ENCODE measurements at regions of chr20 and their contacts with region 1.

Region 1: DNA sequence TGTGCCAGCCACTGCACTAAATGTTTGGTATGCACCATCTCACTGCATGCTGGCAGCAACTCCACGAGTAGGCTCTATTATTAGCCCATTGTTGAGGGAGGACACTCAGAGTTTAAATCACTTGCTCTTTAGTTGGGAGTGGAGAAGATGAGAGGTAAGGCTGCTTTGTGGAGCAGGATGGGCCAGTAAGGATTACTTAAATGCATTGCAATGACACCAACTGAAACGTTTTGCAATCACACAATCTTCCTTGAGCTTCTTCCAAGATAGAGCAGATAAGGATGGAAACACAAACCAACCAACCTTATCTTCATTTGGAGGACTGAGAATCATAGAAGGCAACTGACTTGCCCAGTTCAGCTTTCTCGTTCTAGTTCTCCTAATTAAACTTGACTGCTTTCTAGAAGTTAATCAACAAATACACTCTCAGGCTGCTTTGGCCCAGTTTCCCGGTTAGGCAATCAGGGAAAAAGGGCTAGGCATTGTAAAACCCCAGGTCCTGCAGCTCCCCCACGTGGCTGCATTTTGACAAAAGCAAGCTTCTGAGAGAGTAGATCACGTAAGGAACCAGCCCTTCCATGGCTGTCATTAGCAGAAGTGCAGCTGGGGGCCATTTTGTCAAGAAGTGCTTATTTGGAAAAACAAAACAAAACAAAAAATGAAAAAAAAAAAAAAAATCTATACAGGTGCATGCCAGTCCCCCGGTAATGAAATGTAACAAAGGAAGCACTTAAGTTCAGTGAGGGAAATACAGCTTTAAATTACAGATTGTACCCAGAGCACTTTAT is 130.6 kb downstream of the BCAS1 start:
- DNase-seq: peak; percentile 95
- ATAC-seq: peak; percentile 91
- H3K4me3 ChIP-seq: no peak overlapping the region; a peak in 1 of 6 replicates
- H3K27ac ChIP-seq: no peak overlapping the region
- H3K4me1 ChIP-seq: peaks cover 83% of the 10 kb centered on the region
- H3K27me3 ChIP-seq: no peaks in the 10 kb centered on the region; a peak in 1 of 5 replicates
- CTCF ChIP-seq: peak; percentile 94
- EP300 ChIP-seq: no peak
- POLR2A ChIP-seq: no peak
- RAD21 ChIP-seq: peak; percentile 95

Region 2: GRCh38 chr20:53413186-53413631 is 526.6 kb before region 1 on chr20:
- CTCF ChIA-PET with region 1: no interaction called
- POLR2A ChIA-PET with region 1: no interaction called
- in situ Hi-C with region 1: loop called (anchors 5 kb)
- intact Hi-C with region 1: loop called (anchors 1 kb)
- DNase-seq: peak; percentile 83
- ATAC-seq: peak; percentile 96
- H3K4me3 ChIP-seq: peak overlapping the region in 1 of 3 experiments; percentile 20; a peak in 3 of 6 replicates
- H3K27ac ChIP-seq: no peak overlapping the region
- H3K4me1 ChIP-seq: no peaks in the 10 kb centered on the region
- H3K27me3 ChIP-seq: no peaks in the 10 kb centered on the region
- CTCF ChIP-seq: peak; percentile 98
- EP300 ChIP-seq: no peak
- POLR2A ChIP-seq: no peak
- RAD21 ChIP-seq: peak; percentile 98

Region 3: DNA sequence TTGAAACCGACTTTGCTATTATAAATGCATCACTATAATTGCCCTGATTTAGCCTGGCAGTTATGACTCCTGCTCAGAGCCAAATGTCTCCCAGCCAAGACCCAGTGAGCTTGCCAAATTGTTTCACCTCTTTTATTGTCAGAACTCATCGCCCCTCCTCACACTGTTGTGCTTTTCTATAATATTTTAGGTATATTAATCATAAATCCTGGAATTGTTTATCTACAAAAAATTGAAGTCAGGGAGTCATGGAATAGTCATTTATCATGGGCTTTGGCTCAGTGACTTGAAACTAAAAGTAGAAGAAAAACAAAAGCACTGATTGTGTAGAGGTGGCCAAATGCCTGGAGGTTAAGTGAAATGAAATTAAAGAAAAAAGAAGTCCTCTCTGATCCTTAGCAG is 353.8 kb after region 1 on chr20:
- CTCF ChIA-PET with region 1: no interaction called
- POLR2A ChIA-PET with region 1: no interaction called
- in situ Hi-C with region 1: no loop called
- intact Hi-C with region 1: no loop called
- DNase-seq: no peak
- ATAC-seq: no peak
- H3K4me3 ChIP-seq: no peak overlapping the region
- H3K27ac ChIP-seq: no peak overlapping the region
- H3K4me1 ChIP-seq: no peaks in the 10 kb centered on the region
- H3K27me3 ChIP-seq: peaks cover 0 to 2% of the 10 kb centered on the region in 2 experiments; a peak in 1 of 5 replicates
- CTCF ChIP-seq: no peak
- EP300 ChIP-seq: no peak
- POLR2A ChIP-seq: no peak
- RAD21 ChIP-seq: no peak